Activated naive CD4-positive, alpha-beta T cell treated with anti-CD3 and anti-CD28 coated beads for 36 hours (primary cell): ENCODE measurements at regions of chr12 and their contacts with region 1.

Region 1: GRCh38 chr12:23055004-23055403 is 430.0 kb downstream of the ETNK1 start:
- DNase-seq: peak; percentile 11
- H3K4me3 Mint-ChIP-seq: no peak overlapping the region
- H3K27ac Mint-ChIP-seq: no peak overlapping the region
- H3K4me1 Mint-ChIP-seq: no peaks in the 10 kb centered on the region
- H3K27me3 Mint-ChIP-seq: no peaks in the 10 kb centered on the region

Region 2: GRCh38 chr12:22684140-22685118 is 370.6 kb before region 1 on chr12:
- CTCF ChIA-PET with region 1: no interaction called
- intact Hi-C with region 1: loop called (anchors 10 kb)
- DNase-seq: no peak
- H3K4me3 Mint-ChIP-seq: no peak overlapping the region
- H3K27ac Mint-ChIP-seq: no peak overlapping the region
- H3K4me1 Mint-ChIP-seq: peaks cover 4% of the 10 kb centered on the region
- H3K27me3 Mint-ChIP-seq: no peaks in the 10 kb centered on the region

Region 3: GRCh38 chr12:22856178-22856577 is 198.8 kb before region 1 on chr12:
- CTCF ChIA-PET with region 1: no interaction called
- intact Hi-C with region 1: loop called (anchors 2 kb)
- DNase-seq: no peak
- H3K4me3 Mint-ChIP-seq: no peak overlapping the region
- H3K27ac Mint-ChIP-seq: no peak overlapping the region
- H3K4me1 Mint-ChIP-seq: no peaks in the 10 kb centered on the region
- H3K27me3 Mint-ChIP-seq: peaks cover 15% of the 10 kb centered on the region

Region 4: GRCh38 chr12:23113781-23114180 is 58.8 kb after region 1 on chr12:
- CTCF ChIA-PET with region 1: no interaction called
- intact Hi-C with region 1: no loop called
- DNase-seq: no peak
- H3K4me3 Mint-ChIP-seq: no peak overlapping the region
- H3K27ac Mint-ChIP-seq: no peak overlapping the region
- H3K4me1 Mint-ChIP-seq: no peaks in the 10 kb centered on the region
- H3K27me3 Mint-ChIP-seq: no peaks in the 10 kb centered on the region

Region 5: DNA sequence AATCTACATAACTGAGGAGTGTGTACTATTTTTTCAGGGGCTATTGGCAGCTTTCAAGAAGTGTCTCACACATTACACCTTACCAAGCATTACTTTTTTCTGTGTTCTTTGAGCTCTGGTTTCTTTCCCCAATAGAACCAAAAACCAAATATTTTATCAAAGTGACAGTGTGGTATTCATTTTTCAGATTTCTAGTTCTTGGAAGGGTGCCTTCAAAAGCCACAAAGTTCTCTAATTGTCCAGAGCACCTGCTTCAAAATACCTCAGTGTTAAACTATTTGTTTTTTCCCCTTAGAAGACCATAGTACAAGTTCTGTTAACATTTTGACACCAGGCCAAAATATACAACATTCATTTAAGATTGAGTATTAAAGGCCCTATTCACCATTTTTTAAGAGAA is 85.7 kb after region 1 on chr12:
- CTCF ChIA-PET with region 1: no interaction called
- intact Hi-C with region 1: no loop called
- DNase-seq: no peak
- H3K4me3 Mint-ChIP-seq: no peak overlapping the region
- H3K27ac Mint-ChIP-seq: no peak overlapping the region
- H3K4me1 Mint-ChIP-seq: no peaks in the 10 kb centered on the region
- H3K27me3 Mint-ChIP-seq: no peaks in the 10 kb centered on the region

Region 6: GRCh38 chr12:23174917-23175316 is 119.9 kb after region 1 on chr12:
- CTCF ChIA-PET with region 1: no interaction called
- intact Hi-C with region 1: no loop called
- DNase-seq: no peak
- H3K4me3 Mint-ChIP-seq: no peak overlapping the region
- H3K27ac Mint-ChIP-seq: no peak overlapping the region
- H3K4me1 Mint-ChIP-seq: no peaks in the 10 kb centered on the region
- H3K27me3 Mint-ChIP-seq: no peaks in the 10 kb centered on the region